ENCODE measurements at regions of chr3 and their contacts with region 1.

Region 1: DNA sequence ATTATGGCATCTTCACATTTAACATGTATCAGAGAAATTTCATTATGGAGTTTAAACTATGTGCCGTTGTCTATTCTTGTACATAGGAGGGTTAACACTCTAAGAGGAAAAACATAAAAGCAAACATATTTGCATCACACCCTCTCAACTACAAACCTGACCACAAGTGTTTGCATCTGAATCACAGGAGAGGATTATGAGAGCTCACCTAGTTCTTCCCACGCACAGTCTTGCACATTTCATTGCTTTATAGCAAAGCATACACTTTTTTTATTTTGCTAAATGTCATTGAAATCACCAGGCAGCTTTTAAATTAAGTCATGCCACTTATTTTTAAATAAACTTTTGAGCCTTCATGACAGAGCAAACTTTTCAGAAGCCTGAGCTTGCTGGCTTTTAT is 12.5 kb downstream of the TRAT1 start:
- DNase-seq: peak in 4 of 9 experiments; percentile 36 to 78 (median 60)
- ATAC-seq: peak; percentile 90
- H3K4me3 ChIP-seq: no peak overlapping the region
- H3K4me3 Mint-ChIP-seq: peak overlapping the region; percentile 66
- H3K27ac ChIP-seq: peak overlapping the region; percentile 13 to 43
- H3K27ac Mint-ChIP-seq: peak overlapping the region; percentile 90
- H3K4me1 ChIP-seq: peaks cover 60% of the 10 kb centered on the region
- H3K4me1 Mint-ChIP-seq: peaks cover 84% of the 10 kb centered on the region
- H3K27me3 ChIP-seq: no peaks in the 10 kb centered on the region
- H3K27me3 Mint-ChIP-seq: no peaks in the 10 kb centered on the region
- CTCF ChIP-seq: no peak

Region 2: DNA sequence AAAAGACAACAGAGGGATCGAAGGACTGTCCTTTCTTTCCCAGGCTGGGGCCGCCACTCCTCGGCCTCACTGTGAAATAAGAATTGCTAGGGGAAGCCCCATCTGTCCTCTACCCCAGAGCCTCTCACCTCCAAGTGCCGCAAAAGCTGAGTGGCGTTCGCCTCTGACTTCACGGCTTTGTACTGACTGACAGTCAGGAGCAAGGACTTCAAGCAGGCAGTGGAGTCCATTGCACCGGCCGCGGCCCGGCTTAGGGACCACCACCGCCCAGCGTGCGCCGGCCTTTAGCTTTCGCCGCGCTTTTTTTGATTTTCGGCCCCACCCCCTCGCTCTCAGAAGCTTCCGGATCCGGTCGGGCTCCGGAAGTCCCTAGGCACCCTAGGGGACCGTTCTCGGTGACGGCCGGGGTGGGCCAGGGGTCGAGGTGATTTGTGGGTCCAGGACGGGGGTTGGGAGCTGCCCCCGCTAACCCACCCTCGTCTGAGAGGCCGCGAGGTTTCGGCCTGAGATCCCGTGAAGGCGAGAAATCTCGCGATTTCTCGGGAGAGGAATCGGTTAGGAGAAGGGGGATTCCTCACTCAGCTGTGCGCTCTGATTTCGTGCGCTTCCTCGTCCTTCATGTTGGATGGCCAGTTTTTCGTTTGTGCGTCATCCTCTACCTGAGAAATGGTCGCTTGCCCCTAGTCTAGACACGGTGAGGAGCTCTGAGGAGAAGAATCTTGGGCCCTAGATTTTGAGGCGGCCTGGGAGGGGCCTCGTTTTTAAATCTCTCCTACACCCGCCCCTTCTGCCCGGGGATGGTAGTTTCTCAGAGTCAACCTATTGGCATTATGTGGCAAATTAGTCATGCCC is 245.7 kb before region 1 on chr3 and contains the starts of genes CIP2A and DZIP3:
- CTCF ChIA-PET with region 1: no interaction called
- POLR2A ChIA-PET with region 1: interaction called, 5 read pairs
- intact Hi-C with region 1: loop called in 1 of 2 experiments (anchors 5 kb)
- DNase-seq: peak; percentile 71 to 96 (median 81)
- ATAC-seq: peak; percentile 79
- H3K4me3 ChIP-seq: peak within 1 kb of the TSS; percentile 90 to 93
- H3K4me3 Mint-ChIP-seq: peak within 1 kb of the TSS; percentile 97
- H3K27ac ChIP-seq: peak within 1 kb of the TSS; percentile 91 to 98
- H3K27ac Mint-ChIP-seq: peak within 1 kb of the TSS; percentile 99
- H3K4me1 ChIP-seq: peaks cover 14% of the 10 kb centered on the region
- H3K4me1 Mint-ChIP-seq: peaks cover 31% of the 10 kb centered on the region
- H3K27me3 ChIP-seq: no peaks in the 10 kb centered on the region
- H3K27me3 Mint-ChIP-seq: no peaks in the 10 kb centered on the region
- CTCF ChIP-seq: no peak
- total RNA-seq, gene CIP2A: 3.0 to 4.2 TPM
- total RNA-seq, gene DZIP3: 8.7 to 9.4 TPM

Region 3: DNA sequence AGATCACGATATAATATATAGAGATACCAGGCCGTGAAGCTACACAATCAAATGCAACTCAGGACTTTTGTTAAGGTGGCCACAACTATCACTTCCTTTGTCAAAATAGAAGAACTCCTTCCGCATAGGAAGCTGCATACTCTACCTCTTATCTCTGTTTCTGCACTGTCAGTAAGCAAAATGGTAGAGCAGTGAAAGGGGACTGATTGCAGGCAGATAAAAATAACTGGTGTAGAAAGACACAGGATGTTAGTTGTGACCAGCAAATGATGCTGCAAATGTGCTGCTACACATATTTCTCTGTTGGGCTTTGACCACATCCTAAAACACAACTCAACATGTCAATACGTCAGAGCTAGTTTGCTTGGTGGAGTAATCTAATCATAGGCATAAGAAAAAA is 28.8 kb before region 1 on chr3:
- CTCF ChIA-PET with region 1: no interaction called
- POLR2A ChIA-PET with region 1: interaction called, 9 read pairs
- intact Hi-C with region 1: loop called in 1 of 2 experiments (anchors 1 kb)
- DNase-seq: peak in 5 of 9 experiments; percentile 24 to 88 (median 49)
- ATAC-seq: peak; percentile 92
- H3K4me3 ChIP-seq: no peak overlapping the region
- H3K4me3 Mint-ChIP-seq: peak overlapping the region; percentile 40
- H3K27ac ChIP-seq: peak overlapping the region; percentile 25 to 70
- H3K27ac Mint-ChIP-seq: peak overlapping the region; percentile 71
- H3K4me1 ChIP-seq: peaks cover 19% of the 10 kb centered on the region
- H3K4me1 Mint-ChIP-seq: peaks cover 26% of the 10 kb centered on the region
- H3K27me3 ChIP-seq: no peaks in the 10 kb centered on the region
- H3K27me3 Mint-ChIP-seq: no peaks in the 10 kb centered on the region
- CTCF ChIP-seq: no peak

Region 4: GRCh38 chr3:108845709-108846293 is 10.7 kb after region 1 on chr3:
- CTCF ChIA-PET with region 1: interaction called, 3 read pairs
- POLR2A ChIA-PET with region 1: interaction called, 3 read pairs
- intact Hi-C with region 1: loop called in 1 of 2 experiments (anchors 2 kb)
- DNase-seq: no peak
- ATAC-seq: no peak
- H3K4me3 ChIP-seq: no peak overlapping the region
- H3K4me3 Mint-ChIP-seq: no peak overlapping the region
- H3K27ac ChIP-seq: no peak overlapping the region
- H3K27ac Mint-ChIP-seq: peak overlapping the region; percentile 72
- H3K4me1 ChIP-seq: peaks cover 6% of the 10 kb centered on the region
- H3K4me1 Mint-ChIP-seq: peaks cover 63% of the 10 kb centered on the region
- H3K27me3 ChIP-seq: no peaks in the 10 kb centered on the region
- H3K27me3 Mint-ChIP-seq: no peaks in the 10 kb centered on the region
- CTCF ChIP-seq: no peak

Region 5: DNA sequence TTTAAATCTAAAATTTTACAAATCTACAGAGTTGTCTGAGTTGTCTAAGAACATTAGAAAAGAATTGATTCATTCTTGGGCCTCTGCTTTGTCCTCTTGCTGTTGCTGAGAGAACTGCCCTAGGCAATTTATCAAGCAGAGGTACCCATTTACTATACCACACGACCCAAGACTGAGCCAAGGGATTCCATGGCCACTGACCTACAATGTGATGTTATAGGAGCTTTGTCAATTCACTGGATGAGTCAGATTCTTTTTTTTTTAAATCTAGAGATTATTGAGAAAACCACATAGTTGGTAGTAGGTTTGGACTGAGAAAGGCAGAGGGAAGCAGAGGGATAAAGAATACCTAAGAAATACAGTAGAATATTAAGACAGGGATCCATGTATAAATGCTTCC is 42.8 kb after region 1 on chr3:
- CTCF ChIA-PET with region 1: interaction called, 3 read pairs
- POLR2A ChIA-PET with region 1: no interaction called
- intact Hi-C with region 1: loop called in 1 of 2 experiments (anchors 5 kb)
- DNase-seq: no peak
- ATAC-seq: no peak
- H3K4me3 ChIP-seq: no peak overlapping the region
- H3K4me3 Mint-ChIP-seq: no peak overlapping the region
- H3K27ac ChIP-seq: no peak overlapping the region
- H3K27ac Mint-ChIP-seq: no peak overlapping the region
- H3K4me1 ChIP-seq: no peaks in the 10 kb centered on the region
- H3K4me1 Mint-ChIP-seq: no peaks in the 10 kb centered on the region
- H3K27me3 ChIP-seq: no peaks in the 10 kb centered on the region
- H3K27me3 Mint-ChIP-seq: no peaks in the 10 kb centered on the region
- CTCF ChIP-seq: no peak

Region 6: DNA sequence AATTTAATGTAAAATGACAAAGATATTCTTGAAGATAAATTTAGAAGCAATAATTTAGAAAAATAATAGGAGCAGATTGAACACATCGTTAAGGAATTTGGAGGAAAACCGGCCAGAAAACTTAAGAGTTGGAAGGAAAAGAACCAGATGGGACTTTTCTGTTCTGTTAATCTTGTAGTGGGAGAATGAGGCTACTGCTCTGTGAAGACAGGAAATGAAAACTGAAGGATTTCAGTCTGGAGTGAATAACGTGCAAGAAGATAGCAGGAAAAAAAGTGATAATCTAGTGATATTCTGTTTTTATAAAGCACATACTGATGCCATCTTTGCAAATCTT is 407.1 kb after region 1 on chr3:
- CTCF ChIA-PET with region 1: no interaction called
- POLR2A ChIA-PET with region 1: no interaction called
- intact Hi-C with region 1: no loop called
- DNase-seq: no peak
- ATAC-seq: no peak
- H3K4me3 ChIP-seq: no peak overlapping the region
- H3K4me3 Mint-ChIP-seq: no peak overlapping the region
- H3K27ac ChIP-seq: no peak overlapping the region
- H3K27ac Mint-ChIP-seq: no peak overlapping the region
- H3K4me1 ChIP-seq: no peaks in the 10 kb centered on the region
- H3K4me1 Mint-ChIP-seq: no peaks in the 10 kb centered on the region
- H3K27me3 ChIP-seq: no peaks in the 10 kb centered on the region
- H3K27me3 Mint-ChIP-seq: no peaks in the 10 kb centered on the region
- CTCF ChIP-seq: no peak

Region 7: DNA sequence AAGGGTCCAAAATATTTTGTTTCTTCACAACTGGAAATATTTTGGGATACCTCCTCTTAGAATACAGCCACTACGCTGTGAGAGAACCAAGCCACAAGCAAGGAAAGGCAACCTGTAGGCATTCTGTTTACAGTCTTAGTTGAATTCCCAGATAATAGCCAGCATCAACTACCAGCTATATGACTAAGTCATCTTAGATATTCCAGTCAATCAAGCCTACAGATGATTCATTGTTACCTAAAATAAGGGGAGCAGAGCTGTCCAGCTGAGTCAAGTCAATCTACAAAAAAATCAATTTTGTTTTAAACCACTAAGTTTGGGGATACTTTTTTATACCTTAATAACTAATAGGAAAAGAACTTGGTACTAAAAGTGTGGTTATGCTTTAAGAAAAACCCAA is 1028.6 kb after region 1 on chr3:
- CTCF ChIA-PET with region 1: no interaction called
- POLR2A ChIA-PET with region 1: no interaction called
- intact Hi-C with region 1: no loop called
- DNase-seq: no peak
- ATAC-seq: no peak
- H3K4me3 ChIP-seq: no peak overlapping the region
- H3K4me3 Mint-ChIP-seq: no peak overlapping the region
- H3K27ac ChIP-seq: no peak overlapping the region
- H3K27ac Mint-ChIP-seq: no peak overlapping the region
- H3K4me1 ChIP-seq: no peaks in the 10 kb centered on the region
- H3K4me1 Mint-ChIP-seq: peaks cover 2% of the 10 kb centered on the region
- H3K27me3 ChIP-seq: no peaks in the 10 kb centered on the region
- H3K27me3 Mint-ChIP-seq: no peaks in the 10 kb centered on the region
- CTCF ChIP-seq: no peak

Measured in CD8-positive, alpha-beta T cell (primary cell).